ENCODE measurements at regions of chr17 and their contacts with region 1.

Region 1: GRCh38 chr17:62692721-62693483 is 65.4 kb downstream of the MRC2 start:
- DNase-seq: no peak
- ATAC-seq: no peak
- H3K4me3 ChIP-seq: no peak overlapping the region
- H3K27ac ChIP-seq: no peak overlapping the region
- H3K4me1 ChIP-seq: no peaks in the 10 kb centered on the region
- H3K27me3 ChIP-seq: no peaks in the 10 kb centered on the region
- CTCF ChIP-seq: peak in 1 of 5 experiments; percentile 28
- POLR2A ChIP-seq: no peak

Region 2: GRCh38 chr17:63516910-63517824 is 824.3 kb after region 1 on chr17:
- in situ Hi-C with region 1: loop called in 1 of 4 experiments (anchors 25 kb)
- intact Hi-C with region 1: no loop called
- DNase-seq: no peak
- ATAC-seq: no peak
- H3K4me3 ChIP-seq: no peak overlapping the region
- H3K27ac ChIP-seq: no peak overlapping the region
- H3K4me1 ChIP-seq: no peaks in the 10 kb centered on the region
- H3K27me3 ChIP-seq: no peaks in the 10 kb centered on the region
- CTCF ChIP-seq: no peak
- POLR2A ChIP-seq: no peak

Measured in gastrocnemius medialis (tissue), 4 donors.